ENCODE measurements at regions of chr11 and their contacts with region 1.

Region 1: DNA sequence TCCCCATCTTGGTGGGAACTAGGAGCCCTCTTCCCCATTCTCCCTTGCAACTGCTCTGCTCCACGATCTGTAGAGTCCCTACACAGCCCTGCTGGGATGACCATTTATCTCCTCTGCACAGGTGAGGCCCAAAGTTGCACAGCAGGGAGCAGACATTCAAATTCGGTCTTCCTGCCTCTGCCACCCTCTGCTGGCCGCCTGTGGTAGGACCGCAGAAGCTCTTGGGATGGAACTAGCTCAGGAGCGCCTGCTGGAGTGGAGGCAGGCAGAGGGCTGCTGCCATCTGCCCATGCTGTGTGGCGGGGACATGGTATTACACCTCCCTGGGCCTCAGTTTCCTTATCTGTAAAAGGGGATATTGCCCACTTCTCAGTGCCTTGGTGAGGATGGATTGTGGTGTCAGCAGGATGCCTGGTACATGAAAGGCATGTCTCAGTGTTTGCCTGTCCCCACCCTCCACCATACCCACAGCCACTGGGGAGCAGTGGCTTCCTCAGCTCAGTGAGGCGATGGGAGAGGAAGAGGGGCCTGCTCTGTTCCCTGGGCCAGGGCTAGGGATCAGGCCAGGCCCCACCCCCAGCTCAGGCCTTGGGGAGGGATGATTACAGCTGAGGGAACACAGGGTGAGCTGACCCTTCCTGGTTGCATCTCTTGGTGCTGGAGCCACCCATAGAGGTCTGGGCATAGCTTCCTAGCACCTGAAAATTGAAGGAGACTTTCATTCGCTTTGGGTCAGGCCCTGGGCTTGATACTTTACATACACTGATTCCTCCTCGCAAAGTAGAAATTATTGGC is 11.3 kb upstream of the OMP start:
- DNase-seq: peak; percentile 92
- ATAC-seq: peak; percentile 100
- H3K4me3 Mint-ChIP-seq: no peak overlapping the region
- H3K27ac Mint-ChIP-seq: no peak overlapping the region
- H3K4me1 Mint-ChIP-seq: peaks cover 5% of the 10 kb centered on the region
- H3K27me3 Mint-ChIP-seq: no peaks in the 10 kb centered on the region
- CTCF ChIP-seq: peak; percentile 75

Region 2: GRCh38 chr11:76807206-76807875 is 284.0 kb before region 1 on chr11:
- CTCF ChIA-PET with region 1: interaction called, 9 read pairs
- POLR2A ChIA-PET with region 1: no interaction called
- intact Hi-C with region 1: loop called (anchors 10 kb)
- DNase-seq: peak; percentile 91
- ATAC-seq: peak; percentile 31
- H3K4me3 Mint-ChIP-seq: no peak overlapping the region
- H3K27ac Mint-ChIP-seq: no peak overlapping the region
- H3K4me1 Mint-ChIP-seq: peaks cover 32% of the 10 kb centered on the region
- H3K27me3 Mint-ChIP-seq: peaks cover 3% of the 10 kb centered on the region
- CTCF ChIP-seq: peak; percentile 76

Region 3: GRCh38 chr11:76978818-76979217 is 112.5 kb before region 1 on chr11:
- CTCF ChIA-PET with region 1: no interaction called
- POLR2A ChIA-PET with region 1: no interaction called
- intact Hi-C with region 1: no loop called
- DNase-seq: no peak
- ATAC-seq: no peak
- H3K4me3 Mint-ChIP-seq: no peak overlapping the region
- H3K27ac Mint-ChIP-seq: no peak overlapping the region
- H3K4me1 Mint-ChIP-seq: no peaks in the 10 kb centered on the region
- H3K27me3 Mint-ChIP-seq: no peaks in the 10 kb centered on the region
- CTCF ChIP-seq: no peak

Region 4: DNA sequence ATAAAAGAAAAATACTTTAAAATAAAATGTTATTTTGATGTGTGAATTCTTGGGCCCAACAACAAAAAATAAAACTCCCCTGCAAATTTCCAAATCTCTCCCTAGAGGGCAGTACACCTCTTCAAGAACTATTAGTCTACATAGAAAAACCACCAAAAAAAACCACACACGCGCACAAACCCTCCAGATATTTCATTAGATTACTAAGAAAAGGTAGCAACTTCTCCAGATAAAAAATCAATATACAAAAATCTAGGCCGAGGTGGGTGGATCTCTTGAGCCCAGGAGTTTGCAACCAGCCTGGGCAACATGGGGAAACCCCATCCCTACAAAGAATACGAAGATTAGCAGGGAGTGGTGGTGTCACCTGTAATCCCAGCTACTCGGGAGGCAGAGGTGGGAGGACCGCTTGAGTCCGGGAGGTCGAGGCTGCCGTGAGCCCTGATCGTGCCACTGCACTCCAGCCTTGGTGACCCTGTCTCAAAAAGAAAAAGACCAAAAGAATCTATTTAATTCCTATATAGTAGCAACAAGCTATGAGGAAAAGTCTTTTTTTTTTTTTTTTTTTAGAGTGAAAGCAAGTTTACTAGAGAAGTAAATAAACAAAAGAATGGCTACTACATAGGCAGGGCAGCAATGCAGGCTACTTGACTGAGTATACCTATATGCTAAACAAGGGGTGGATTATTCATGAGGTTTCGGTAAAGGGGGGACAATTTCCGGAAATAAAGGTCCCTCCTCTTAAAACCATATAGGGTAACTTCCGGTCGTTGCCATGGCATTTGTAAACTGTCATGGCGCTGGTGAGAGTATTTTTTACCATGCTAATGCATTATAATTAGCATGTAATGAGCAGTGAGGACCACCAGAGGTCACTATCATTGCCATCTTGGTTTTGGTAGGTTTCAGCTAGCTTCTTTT is 44.1 kb before region 1 on chr11:
- CTCF ChIA-PET with region 1: interaction called, 65 read pairs
- POLR2A ChIA-PET with region 1: interaction called, 4 read pairs
- intact Hi-C with region 1: loop called (anchors 5 kb)
- DNase-seq: peak; percentile 89
- ATAC-seq: peak; percentile 91
- H3K4me3 Mint-ChIP-seq: peak overlapping the region; percentile 62
- H3K27ac Mint-ChIP-seq: peak overlapping the region; percentile 52
- H3K4me1 Mint-ChIP-seq: peaks cover 13% of the 10 kb centered on the region
- H3K27me3 Mint-ChIP-seq: peaks cover 17% of the 10 kb centered on the region
- CTCF ChIP-seq: no peak

Region 5: GRCh38 chr11:77053217-77054015 is 37.9 kb before region 1 on chr11:
- CTCF ChIA-PET with region 1: interaction called, 65 read pairs
- POLR2A ChIA-PET with region 1: interaction called, 4 read pairs
- intact Hi-C with region 1: loop called (anchors 5 kb)
- DNase-seq: no peak
- ATAC-seq: no peak
- H3K4me3 Mint-ChIP-seq: no peak overlapping the region
- H3K27ac Mint-ChIP-seq: no peak overlapping the region
- H3K4me1 Mint-ChIP-seq: no peaks in the 10 kb centered on the region
- H3K27me3 Mint-ChIP-seq: no peaks in the 10 kb centered on the region
- CTCF ChIP-seq: no peak

Region 6: DNA sequence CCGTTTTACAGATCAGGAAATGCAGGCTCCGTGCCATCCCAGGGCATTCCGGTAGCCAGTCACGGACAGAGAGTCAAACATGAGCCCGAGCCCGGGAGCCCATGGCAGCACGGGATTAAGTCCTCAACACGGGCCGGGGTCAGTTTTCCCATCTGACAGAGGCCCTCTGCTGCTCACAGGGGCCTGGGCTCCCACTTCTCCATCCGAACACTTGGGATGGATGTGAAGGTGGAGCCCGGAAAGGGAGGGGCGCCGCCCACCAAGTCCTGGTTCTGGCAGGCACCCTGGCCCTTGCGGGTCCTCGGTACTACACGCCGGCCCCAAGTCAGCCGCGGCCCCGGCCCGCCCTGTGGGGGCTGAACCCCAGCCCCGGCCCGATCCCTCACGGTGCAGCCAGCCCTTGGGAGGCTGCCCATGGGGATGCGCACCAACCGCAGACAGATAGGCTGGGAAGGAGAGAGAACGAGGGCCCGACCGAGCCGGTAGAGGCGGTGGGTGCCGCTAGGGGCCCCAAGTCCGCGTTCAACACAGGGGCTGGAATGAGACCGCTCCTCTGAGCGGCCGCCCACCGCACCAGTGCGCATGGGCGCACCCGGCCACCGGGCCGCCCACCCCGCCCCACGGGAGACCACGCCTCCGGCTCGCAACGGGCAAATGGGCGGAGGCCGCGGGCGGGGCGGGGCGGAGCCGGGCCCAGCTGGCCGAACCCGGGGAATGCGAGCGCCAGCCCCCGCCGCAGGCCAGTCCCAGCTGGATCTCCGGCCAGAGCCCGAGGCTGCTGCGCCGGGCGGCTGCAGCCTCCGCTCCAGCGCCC is 24.9 kb before region 1 on chr11 and contains the start of gene CAPN5:
- CTCF ChIA-PET with region 1: interaction called, 35 read pairs
- POLR2A ChIA-PET with region 1: no interaction called
- intact Hi-C with region 1: no loop called
- DNase-seq: peak; percentile 87
- ATAC-seq: peak; percentile 95
- H3K4me3 Mint-ChIP-seq: peak within 1 kb of the TSS; percentile 77
- H3K27ac Mint-ChIP-seq: peak within 1 kb of the TSS; percentile 64
- H3K4me1 Mint-ChIP-seq: peaks cover 16% of the 10 kb centered on the region
- H3K27me3 Mint-ChIP-seq: no peaks in the 10 kb centered on the region
- CTCF ChIP-seq: peak; percentile 47
- total RNA-seq, gene CAPN5: 1.6 to 2.2 TPM

Region 7: GRCh38 chr11:77073328-77074001 is 17.9 kb before region 1 on chr11:
- CTCF ChIA-PET with region 1: interaction called, 15 read pairs
- POLR2A ChIA-PET with region 1: no interaction called
- intact Hi-C with region 1: no loop called
- DNase-seq: no peak
- ATAC-seq: peak; percentile 67
- H3K4me3 Mint-ChIP-seq: no peak overlapping the region
- H3K27ac Mint-ChIP-seq: no peak overlapping the region
- H3K4me1 Mint-ChIP-seq: peaks cover 23% of the 10 kb centered on the region
- H3K27me3 Mint-ChIP-seq: no peaks in the 10 kb centered on the region
- CTCF ChIP-seq: no peak

Region 8: DNA sequence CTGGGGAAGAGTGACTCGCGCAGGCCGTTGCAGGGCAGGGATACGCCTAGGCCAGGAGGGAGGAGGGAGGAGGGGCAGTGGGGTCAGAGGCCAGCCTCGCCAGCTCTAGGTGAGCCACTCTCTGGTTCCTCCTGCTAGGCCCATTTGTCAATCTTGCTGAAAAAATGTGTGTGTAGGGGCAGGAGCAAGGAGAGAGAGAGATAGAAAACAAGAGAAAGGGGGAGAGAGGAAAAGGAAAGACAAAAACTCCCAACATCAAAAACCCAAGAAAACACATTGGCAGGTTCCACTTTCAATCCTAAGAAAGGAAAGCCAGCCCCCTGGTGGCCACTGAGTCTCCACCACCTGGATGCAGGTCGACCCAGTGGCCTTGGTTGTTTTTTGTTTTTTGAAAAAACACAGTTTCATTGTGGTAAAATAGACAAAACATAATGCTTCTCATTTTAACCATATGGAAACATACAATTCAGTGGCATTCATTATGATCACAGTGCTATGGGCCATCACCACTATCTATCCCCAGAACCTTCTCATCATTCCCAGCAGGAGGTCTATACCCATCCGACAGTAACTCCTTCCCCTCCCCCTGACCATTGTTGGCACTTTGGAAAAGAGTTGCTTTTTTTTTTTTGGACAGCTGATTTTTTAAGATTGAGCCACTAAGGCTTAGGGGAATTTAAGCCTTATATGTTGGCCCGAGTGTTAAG is 22.2 kb after region 1 on chr11:
- CTCF ChIA-PET with region 1: interaction called, 18 read pairs
- POLR2A ChIA-PET with region 1: no interaction called
- intact Hi-C with region 1: no loop called
- DNase-seq: peak; percentile 52
- ATAC-seq: peak; percentile 37
- H3K4me3 Mint-ChIP-seq: no peak overlapping the region
- H3K27ac Mint-ChIP-seq: no peak overlapping the region
- H3K4me1 Mint-ChIP-seq: no peaks in the 10 kb centered on the region
- H3K27me3 Mint-ChIP-seq: no peaks in the 10 kb centered on the region
- CTCF ChIP-seq: peak; percentile 25